ENCODE measurements at regions of chr12 and their contacts with region 1.

Region 1: DNA sequence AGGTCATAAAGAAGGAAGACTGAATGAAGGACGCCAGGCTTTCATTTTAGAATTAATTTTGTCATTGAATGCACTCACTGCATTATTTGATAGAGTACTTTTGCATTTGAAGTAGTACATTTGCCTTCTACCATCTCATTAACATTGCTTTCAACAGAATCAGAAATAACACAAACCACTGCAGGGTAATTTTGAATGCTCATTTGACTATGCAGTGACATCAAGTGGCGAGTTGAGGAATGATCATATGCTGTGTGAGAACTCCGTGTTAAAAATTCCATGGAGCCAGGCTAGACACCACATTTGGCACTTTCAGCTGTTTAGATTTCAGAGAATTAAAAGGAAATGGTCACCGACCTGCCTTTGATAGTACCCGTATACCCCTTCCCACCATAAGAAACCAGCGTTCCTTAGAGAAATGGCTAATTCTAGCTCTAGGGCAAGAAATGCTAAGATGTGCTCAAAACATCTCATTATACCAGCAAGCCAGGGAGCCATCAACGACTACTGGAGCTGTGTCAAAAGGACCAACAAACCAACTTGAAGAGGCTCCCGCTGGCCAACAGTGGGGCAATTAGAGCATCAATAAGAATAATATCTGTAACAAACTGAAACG is 16.5 kb downstream of the HEBP1 start:
- DNase-seq: no peak
- ATAC-seq: peak; percentile 73

Region 2: GRCh38 chr12:12823292-12823691 is 160.2 kb before region 1 on chr12:
- intact Hi-C with region 1: no loop called
- DNase-seq: no peak
- ATAC-seq: no peak

Region 3: DNA sequence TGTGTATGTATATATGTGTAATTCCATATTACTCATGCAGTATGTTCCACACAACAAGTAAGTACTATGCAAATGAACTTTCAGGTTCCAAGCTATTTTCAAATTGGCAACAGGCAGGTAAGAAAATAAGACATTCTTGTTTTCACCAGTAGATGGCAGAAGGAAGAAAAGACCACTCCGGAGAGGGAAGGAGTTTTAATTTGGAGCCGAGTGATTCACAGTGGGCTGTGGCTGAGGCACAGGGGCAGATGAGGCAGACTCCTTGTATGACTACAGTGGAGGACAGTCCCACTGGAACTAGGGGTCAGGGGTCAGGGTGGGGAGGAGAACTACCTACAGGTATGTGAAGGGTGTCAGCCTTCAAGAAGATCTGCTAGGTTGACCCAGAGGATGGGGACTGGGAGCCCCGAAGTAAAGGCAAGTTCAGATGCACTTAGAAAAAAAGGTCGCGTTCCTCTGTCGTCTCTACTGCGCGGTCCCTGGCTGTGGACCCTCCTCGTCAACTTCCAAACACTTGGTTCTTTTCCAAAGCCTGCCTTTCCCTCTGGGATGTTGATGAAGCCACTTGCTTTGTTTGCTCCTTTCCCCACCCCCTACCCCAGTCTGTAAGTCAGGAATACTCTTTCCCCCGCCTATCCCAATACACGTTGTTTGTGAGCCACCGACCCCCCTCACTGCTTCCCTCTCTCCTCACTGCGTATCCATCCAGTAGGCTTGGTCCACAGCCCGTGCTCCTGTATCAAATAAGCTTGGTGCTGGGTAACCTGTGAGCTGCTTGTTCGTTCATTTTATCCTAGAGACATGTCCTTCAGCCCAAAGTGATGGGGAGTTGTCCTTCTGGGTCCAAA is 146.3 kb before region 1 on chr12:
- intact Hi-C with region 1: loop called (anchors 10 kb)
- DNase-seq: no peak
- ATAC-seq: peak; percentile 44

Region 4: GRCh38 chr12:12916135-12916944 is 67.2 kb before region 1 on chr12:
- intact Hi-C with region 1: loop called (anchors 2 kb)
- DNase-seq: peak; percentile 91
- ATAC-seq: peak; percentile 96

Region 5: GRCh38 chr12:13124661-13125505 is 141.4 kb after region 1 on chr12:
- intact Hi-C with region 1: no loop called
- DNase-seq: no peak
- ATAC-seq: no peak

Measured in Right ventricle myocardium inferior (tissue), 1 donor.